ENCODE measurements at regions of chr7 and their contacts with region 1.

Region 1: DNA sequence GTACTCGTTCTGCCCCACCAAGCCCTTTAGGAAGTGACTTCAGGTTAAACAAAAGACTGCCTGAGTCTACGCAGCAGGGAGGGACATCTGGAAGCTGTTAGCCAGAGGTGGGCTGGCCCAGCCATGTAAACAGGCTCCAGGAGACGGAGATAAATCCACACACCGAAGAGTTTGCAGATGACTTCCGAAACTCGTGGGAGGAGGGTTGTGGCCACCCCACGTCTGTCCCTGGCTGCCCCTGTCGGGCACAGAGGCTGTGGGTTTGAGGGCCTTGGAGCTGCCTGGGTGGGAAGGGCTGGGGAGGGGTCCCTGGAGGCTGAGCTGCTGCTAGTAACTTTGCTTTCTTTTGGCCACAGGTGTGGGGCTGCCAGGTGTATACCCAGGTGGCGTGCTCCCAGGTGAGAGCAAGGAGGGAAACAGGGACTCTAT is 15.6 kb downstream of the ELN start:
- DNase-seq: peak in 1 of 2 donors; percentile 73
- H3K4me3 ChIP-seq: peak overlapping the region in 1 of 4 donors; percentile 7
- H3K27ac ChIP-seq: peak overlapping the region in 4 of 5 donors; percentile 16 to 81 (median 60)
- H3K4me1 ChIP-seq: peaks cover 13 to 50% (median 31%) of the 10 kb centered on the region in 4 donors
- H3K27me3 ChIP-seq: no peaks in the 10 kb centered on the region
- CTCF ChIP-seq: no peak
- EP300 ChIP-seq: no peak
- POLR2A ChIP-seq: no peak

Region 2: DNA sequence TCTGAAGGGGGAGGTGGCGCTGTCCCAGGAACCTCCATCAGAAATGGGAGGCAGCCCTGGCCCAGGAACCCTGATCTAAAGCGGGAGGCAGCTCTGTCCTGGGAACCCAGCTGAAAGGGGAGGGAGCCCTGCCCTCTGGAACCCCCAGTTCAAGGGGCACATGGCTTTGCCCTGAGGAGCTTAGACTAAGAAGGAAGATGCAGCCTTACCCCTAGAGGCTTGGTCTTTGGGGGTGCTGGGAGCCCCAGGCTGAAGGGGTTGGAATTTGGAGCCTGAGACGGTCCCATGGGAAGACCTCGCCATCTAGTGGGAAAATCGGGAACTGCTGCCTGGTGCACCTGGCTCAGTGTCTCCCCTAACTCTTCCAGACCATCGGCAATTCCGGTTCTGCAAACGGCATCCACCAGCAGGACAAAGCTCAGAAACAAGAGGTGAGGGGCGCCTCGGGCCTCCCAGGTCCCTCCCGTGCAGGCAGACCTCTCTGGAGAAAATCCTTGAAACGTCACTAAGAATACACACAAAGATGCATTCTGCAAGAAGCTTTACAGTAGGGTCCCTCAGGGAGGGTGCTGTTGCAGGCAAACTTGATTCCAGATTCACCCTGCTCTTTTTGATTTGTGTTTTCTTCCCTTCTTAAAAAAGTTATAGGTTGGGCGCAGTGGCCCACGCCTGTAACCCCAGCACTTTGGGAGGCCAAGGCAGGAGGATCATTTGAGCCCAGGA is 357.8 kb after region 1 on chr7:
- intact Hi-C with region 1: loop called (anchors 10 kb)
- DNase-seq: peak; percentile 78 to 86
- H3K4me3 ChIP-seq: no peak overlapping the region
- H3K27ac ChIP-seq: no peak overlapping the region
- H3K4me1 ChIP-seq: no peaks in the 10 kb centered on the region
- H3K27me3 ChIP-seq: no peaks in the 10 kb centered on the region
- CTCF ChIP-seq: peak in 6 of 7 experiments; percentile 25 to 99 (median 95)
- EP300 ChIP-seq: no peak
- POLR2A ChIP-seq: no peak

Measured in stomach (tissue), 19 donors.